Lower leg skin (tissue), 4 donors: ENCODE measurements at regions of chr7 and their contacts with region 1.

Region 1: GRCh38 chr7:31134246-31135188 is 82.4 kb downstream of the ADCYAP1R1 start:
- DNase-seq: peak in 1 of 2 donors; percentile 45
- H3K4me3 ChIP-seq: no peak overlapping the region
- CTCF ChIP-seq: peak in 1 of 3 donors; percentile 29
- POLR2A ChIP-seq: no peak

Region 2: DNA sequence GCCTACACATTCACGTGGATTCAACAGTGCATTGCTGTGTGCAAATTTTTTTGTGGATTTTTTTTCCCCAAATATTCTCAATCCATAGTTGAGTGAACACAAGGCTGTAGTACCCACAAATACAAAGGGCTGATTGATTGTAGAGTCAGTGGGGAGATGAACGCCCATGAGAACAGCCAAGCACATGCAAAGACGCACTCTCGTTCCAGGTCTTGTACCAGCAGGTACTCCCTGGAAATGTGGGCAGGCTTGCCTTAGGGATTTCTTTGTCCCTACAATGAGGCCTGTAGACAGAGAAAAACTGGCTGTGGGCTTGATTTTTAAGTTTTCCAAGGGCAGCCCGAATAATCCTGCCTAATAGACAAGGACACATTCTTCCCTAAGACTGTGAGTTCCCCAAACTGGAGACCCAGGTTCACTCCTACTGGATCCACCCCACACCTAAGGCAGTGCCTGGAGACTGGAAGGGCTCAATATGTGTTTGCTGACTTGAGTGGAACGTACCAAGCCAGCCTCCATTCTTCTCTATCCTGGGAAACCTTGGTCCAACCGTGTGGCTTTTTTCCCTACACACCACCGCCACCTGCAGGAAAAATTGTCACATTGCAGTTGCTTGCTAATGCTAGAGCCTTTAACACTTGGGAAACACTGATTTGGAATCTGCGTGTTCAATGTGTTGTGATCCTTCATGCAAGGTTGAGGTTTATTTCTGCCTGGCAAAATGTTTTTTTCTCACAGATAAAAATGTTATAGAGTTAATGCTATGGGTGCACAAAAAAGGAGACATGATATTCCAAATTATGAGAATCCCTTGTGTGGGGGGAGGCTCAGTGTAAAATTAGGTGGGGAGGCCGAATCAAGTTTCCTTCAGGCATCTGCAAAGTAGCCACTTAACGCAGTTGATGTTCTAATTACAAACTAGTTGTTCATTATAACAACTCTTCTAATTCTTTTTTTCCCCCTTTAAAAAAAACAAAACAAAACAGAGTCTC is 601.8 kb after region 1 on chr7:
- intact Hi-C with region 1: loop called (anchors 5 kb)
- DNase-seq: peak in 1 of 2 donors; percentile 35
- H3K4me3 ChIP-seq: no peak overlapping the region
- CTCF ChIP-seq: no peak
- POLR2A ChIP-seq: no peak